ENCODE measurements at regions of chr1 and their contacts with region 1.

Region 1: DNA sequence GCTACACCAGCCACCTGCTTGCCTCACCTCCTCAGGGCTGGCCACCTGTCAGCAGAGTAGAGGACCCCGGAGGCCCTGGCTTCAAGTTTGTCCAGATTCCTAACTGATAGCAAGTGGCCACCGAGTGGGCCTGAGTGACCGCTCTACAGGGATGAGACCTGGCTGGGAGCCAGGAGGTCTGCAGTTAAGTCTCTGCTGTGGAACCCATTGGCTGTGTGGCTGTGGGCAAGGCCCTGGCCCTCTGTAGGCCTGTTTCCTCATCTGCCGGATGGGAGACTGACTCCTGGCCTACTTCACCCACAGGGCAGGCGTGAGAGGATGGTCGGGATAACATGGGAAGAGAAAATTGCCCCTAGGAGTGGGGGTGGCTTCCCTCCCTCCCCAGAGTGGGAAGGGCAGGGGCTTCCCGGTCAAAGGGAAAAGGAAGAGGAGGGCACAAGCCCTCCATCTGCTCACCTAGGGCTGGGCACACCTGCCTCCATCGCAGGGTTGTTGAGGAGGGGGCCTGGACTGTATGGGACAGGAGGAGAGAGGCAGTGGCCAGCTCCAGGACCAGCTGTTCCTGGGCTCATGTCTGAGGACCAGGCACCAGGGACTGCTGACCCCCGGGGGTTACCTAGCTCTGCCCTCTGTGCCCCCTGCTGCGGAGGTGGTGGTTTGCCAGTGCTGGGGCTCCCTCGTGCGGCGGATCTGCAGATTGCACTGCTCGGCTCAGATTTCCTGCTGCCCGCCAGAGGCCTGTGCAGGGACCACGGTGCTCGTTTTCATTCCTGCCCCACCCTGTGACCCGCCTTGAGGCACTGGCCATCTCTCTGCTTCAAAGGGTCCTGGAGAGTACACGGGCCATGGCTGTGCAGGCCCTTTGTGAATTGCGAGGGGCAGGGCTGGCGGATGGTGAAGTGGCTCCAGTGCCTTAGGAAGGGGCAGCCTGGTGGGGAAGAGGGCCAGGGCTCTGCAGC is 9.1 kb upstream of the MTFR1L start:
- DNase-seq: peak; percentile 66 to 89 (median 81)
- ATAC-seq: peak; percentile 91 to 94
- H3K4me3 Mint-ChIP-seq: no peak overlapping the region
- H3K27ac Mint-ChIP-seq: peak overlapping the region in 6 of 10 donors; percentile 9 to 79 (median 43)
- H3K4me1 Mint-ChIP-seq: peaks cover 0 to 19% (median 13%) of the 10 kb centered on the region in 4 donors
- H3K27me3 Mint-ChIP-seq: no peaks in the 10 kb centered on the region

Region 2: DNA sequence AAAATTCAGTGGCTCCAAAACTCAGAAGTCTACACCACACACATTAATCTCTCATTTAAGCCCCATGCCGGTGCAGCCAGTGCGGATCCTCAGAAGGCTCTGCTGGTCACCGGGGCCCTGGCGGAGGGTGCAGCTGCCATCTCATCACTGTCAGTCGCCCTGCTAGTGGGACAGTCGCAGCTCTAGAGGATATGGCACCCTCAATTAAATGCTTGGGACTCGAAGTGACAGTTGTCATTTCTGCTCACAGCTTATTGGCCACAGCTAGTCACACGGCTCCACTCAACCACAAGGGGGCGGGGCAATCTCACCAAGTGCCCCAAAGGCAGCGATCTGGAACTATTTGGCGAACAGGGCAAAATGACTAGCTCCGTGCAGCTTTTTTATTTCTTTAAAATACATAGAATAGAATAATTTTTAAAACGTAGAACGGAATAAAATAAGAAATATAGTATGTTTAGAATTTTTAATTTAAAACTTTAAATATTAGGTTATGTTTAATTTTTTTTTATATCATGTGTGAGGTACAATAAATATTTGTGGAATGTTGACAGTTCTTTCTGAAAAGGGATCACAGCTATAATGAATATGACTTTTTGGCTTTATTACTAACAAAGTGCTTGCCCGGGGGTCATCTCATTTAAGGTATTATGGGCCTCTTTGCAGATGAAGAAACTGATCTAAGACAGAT is 202.0 kb before region 1 on chr1:
- POLR2A ChIA-PET with region 1: interaction called, 22 read pairs
- DNase-seq: peak; percentile 76 to 93 (median 82)
- ATAC-seq: peak; percentile 99 to 100
- H3K4me3 Mint-ChIP-seq: peak overlapping the region; percentile 5 to 74 (median 32)
- H3K27ac Mint-ChIP-seq: peak overlapping the region in 4 of 10 donors; percentile 5 to 80 (median 56)
- H3K4me1 Mint-ChIP-seq: peaks cover 4 to 23% (median 11%) of the 10 kb centered on the region in 4 donors
- H3K27me3 Mint-ChIP-seq: peaks cover 0 to 5% (median 0%) of the 10 kb centered on the region in 5 donors

Region 3: GRCh38 chr1:26391450-26391849 is 580.8 kb after region 1 on chr1:
- POLR2A ChIA-PET with region 1: no interaction called
- DNase-seq: peak in 8 of 10 donors; percentile 9 to 73 (median 36)
- ATAC-seq: peak; percentile 72 to 79
- H3K4me3 Mint-ChIP-seq: peak overlapping the region in 4 of 10 donors; percentile 10 to 29 (median 20)
- H3K27ac Mint-ChIP-seq: peak overlapping the region in 2 of 10 donors; percentile 5 to 41
- H3K4me1 Mint-ChIP-seq: peaks cover 14 to 42% (median 32%) of the 10 kb centered on the region in 4 donors
- H3K27me3 Mint-ChIP-seq: peaks cover 0 to 2% (median 0%) of the 10 kb centered on the region in 5 donors

Measured in naive thymus-derived CD8-positive, alpha-beta T cell (primary cell).